H1 (cell line): ENCODE measurements at regions of chr5 and their contacts with region 1.

Region 1: DNA sequence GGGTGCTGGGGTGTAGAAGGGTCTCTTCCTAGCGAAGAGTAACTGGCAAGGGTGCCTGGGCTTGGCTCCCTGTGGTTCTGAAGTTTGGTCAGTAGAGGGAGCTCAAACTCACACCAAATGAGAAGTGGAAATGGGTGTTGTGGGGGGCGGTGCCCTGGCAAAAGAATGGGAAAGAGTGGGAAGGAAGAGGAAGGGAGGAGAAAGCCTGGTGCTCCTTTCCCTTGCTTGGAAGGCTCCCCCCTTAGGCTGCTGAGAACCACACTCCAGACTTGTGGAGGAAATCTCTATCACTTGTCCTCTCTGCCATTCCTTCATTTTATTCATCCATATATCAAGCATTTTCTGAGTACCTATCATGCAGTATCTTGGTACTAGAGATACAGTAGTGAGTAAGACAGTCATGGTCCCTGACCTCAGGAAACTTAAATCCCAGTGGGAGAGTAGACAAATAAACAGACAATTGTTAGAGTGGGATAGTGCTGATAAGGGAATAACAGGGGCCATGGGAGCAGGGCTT is 13.0 kb downstream of the SLC4A9 start:
- DNase-seq: peak; percentile 67 to 87
- H3K4me3 ChIP-seq: no peak overlapping the region
- H3K27ac ChIP-seq: no peak overlapping the region
- H3K4me1 ChIP-seq: no peaks in the 10 kb centered on the region; a peak in 1 of 7 replicates
- H3K27me3 ChIP-seq: no peaks in the 10 kb centered on the region
- CTCF ChIP-seq: peak; percentile 68 to 89 (median 79)
- EP300 ChIP-seq: no peak
- POLR2A ChIP-seq: no peak
- RAD21 ChIP-seq: peak; percentile 82 to 86

Region 2: GRCh38 chr5:140351609-140352334 is 21.3 kb before region 1 on chr5:
- CTCF ChIA-PET with region 1: interaction called, 21 read pairs
- POLR2A ChIA-PET with region 1: interaction called, 7 read pairs
- DNase-seq: peak in 1 of 2 experiments; percentile 75
- H3K4me3 ChIP-seq: no peak overlapping the region
- H3K27ac ChIP-seq: no peak overlapping the region
- H3K4me1 ChIP-seq: peaks cover 0 to 3% (median 0%) of the 10 kb centered on the region in 4 experiments; a peak in 1 of 7 replicates
- H3K27me3 ChIP-seq: no peaks in the 10 kb centered on the region
- CTCF ChIP-seq: peak in 2 of 3 experiments; percentile 59 to 71; a peak in 3 of 4 replicates
- EP300 ChIP-seq: no peak
- POLR2A ChIP-seq: no peak
- RAD21 ChIP-seq: peak; percentile 48 to 58

Region 3: DNA sequence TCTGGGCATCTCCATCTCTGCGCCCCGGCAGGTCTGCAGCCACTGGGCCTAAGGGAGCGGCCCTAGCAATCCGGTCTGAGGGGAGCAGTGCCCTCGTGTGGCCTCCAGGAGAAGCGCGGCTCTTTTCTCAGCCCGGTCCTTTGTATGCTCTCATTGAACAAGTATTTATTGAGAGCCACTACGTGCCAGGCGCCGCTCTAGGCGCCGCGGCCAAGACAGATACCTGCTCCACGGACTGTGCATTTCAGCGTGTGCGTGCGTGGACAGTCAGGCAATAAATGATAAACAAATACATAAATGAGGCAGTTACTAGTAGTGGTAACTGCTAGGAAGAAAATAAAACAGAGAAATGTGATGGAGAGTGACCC is 15.3 kb before region 1 on chr5:
- CTCF ChIA-PET with region 1: interaction called, 45 read pairs
- POLR2A ChIA-PET with region 1: interaction called, 5 read pairs
- DNase-seq: peak; percentile 75 to 88
- H3K4me3 ChIP-seq: no peak overlapping the region
- H3K27ac ChIP-seq: no peak overlapping the region
- H3K4me1 ChIP-seq: peaks cover 0 to 5% (median 0%) of the 10 kb centered on the region in 4 experiments; a peak in 2 of 7 replicates
- H3K27me3 ChIP-seq: no peaks in the 10 kb centered on the region
- CTCF ChIP-seq: peak in 2 of 3 experiments; percentile 92 to 93; a peak in 3 of 4 replicates
- EP300 ChIP-seq: no peak
- POLR2A ChIP-seq: no peak
- RAD21 ChIP-seq: peak; percentile 76 to 85

Region 4: DNA sequence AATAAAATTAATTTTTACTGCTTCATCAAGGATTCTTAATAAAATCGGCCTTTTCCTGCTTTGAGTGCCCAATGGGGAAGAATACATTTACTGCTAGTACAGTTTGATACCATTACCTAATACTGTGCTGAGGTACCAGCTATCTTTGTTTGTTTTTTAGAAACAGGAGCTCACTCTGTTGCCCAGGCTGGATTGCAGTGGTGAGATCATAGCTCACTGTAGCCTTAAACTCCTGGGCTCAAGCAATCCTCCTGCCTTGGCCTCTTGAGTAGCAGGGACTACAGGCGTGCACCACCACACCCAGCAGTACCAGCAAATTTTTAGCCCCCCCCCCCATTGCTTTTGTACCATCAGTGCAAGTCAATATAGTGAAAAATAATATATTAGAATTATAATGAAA is 15.0 kb after region 1 on chr5:
- CTCF ChIA-PET with region 1: interaction called, 28 read pairs
- POLR2A ChIA-PET with region 1: interaction called, 4 read pairs
- DNase-seq: no peak
- H3K4me3 ChIP-seq: no peak overlapping the region
- H3K27ac ChIP-seq: no peak overlapping the region
- H3K4me1 ChIP-seq: no peaks in the 10 kb centered on the region
- H3K27me3 ChIP-seq: no peaks in the 10 kb centered on the region
- CTCF ChIP-seq: no peak
- EP300 ChIP-seq: no peak
- POLR2A ChIP-seq: no peak
- RAD21 ChIP-seq: no peak

Region 5: GRCh38 chr5:140393738-140394137 is 20.7 kb after region 1 on chr5:
- CTCF ChIA-PET with region 1: interaction called, 15 read pairs
- POLR2A ChIA-PET with region 1: interaction called, 4 read pairs
- DNase-seq: no peak
- H3K4me3 ChIP-seq: no peak overlapping the region
- H3K27ac ChIP-seq: no peak overlapping the region
- H3K4me1 ChIP-seq: peaks cover 0 to 5% (median 2%) of the 10 kb centered on the region in 4 experiments; a peak in 2 of 7 replicates
- H3K27me3 ChIP-seq: no peaks in the 10 kb centered on the region
- CTCF ChIP-seq: no peak
- EP300 ChIP-seq: no peak
- POLR2A ChIP-seq: no peak
- RAD21 ChIP-seq: no peak

Region 6: GRCh38 chr5:140401362-140402257 is 28.6 kb after region 1 on chr5 and contains the start of gene ANKHD1:
- CTCF ChIA-PET with region 1: interaction called, 13 read pairs
- POLR2A ChIA-PET with region 1: interaction called, 6 read pairs
- DNase-seq: peak; percentile 91 to 99
- H3K4me3 ChIP-seq: peak within 1 kb of the TSS; percentile 94 to 100 (median 97)
- H3K27ac ChIP-seq: peak within 1 kb of the TSS; percentile 92
- H3K4me1 ChIP-seq: peaks cover 0 to 9% (median 5%) of the 10 kb centered on the region in 4 experiments; a peak in 5 of 7 replicates
- H3K27me3 ChIP-seq: no peaks in the 10 kb centered on the region
- CTCF ChIP-seq: no peak
- EP300 ChIP-seq: no peak
- POLR2A ChIP-seq: peak; percentile 29 to 90
- RAD21 ChIP-seq: no peak
- total RNA-seq, gene ANKHD1: 101 and 108 TPM in 2 replicates

Region 7: GRCh38 chr5:140420226-140420570 is 47.2 kb after region 1 on chr5:
- CTCF ChIA-PET with region 1: interaction called, 10 read pairs
- POLR2A ChIA-PET with region 1: no interaction called
- DNase-seq: no peak
- H3K4me3 ChIP-seq: no peak overlapping the region
- H3K27ac ChIP-seq: no peak overlapping the region
- H3K4me1 ChIP-seq: 0 out of 7 replicates have a peak, but pooled peaks cover 0 to 2% (median 0%) of the 10 kb centered on the region in 4 experiments
- H3K27me3 ChIP-seq: no peaks in the 10 kb centered on the region
- CTCF ChIP-seq: no peak
- EP300 ChIP-seq: no peak
- POLR2A ChIP-seq: no peak
- RAD21 ChIP-seq: no peak

Region 8: DNA sequence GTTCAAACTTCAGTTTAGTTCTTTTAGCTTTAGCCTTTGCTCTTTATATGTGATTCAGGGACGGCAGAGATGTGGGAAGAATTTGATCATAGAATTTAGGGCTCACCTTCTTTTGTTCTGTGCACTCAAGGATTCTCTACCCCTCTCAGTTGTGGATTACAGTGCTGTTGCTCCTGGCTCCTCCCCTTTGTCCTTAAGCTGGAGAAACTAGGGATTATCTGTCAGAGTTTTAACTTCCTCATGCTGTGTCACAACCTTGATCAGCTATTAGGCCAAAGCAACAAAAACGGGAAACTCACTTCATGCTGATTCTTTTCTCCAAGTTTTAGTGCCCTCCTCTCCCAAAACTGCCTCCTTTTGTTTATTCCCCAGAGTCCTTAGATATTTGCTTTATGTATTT is 580.2 kb after region 1 on chr5:
- CTCF ChIA-PET with region 1: no interaction called
- POLR2A ChIA-PET with region 1: no interaction called
- DNase-seq: no peak
- H3K4me3 ChIP-seq: no peak overlapping the region
- H3K27ac ChIP-seq: no peak overlapping the region
- H3K4me1 ChIP-seq: no peaks in the 10 kb centered on the region
- H3K27me3 ChIP-seq: no peaks in the 10 kb centered on the region
- CTCF ChIP-seq: no peak
- EP300 ChIP-seq: no peak
- POLR2A ChIP-seq: no peak
- RAD21 ChIP-seq: no peak